Endothelial cell of umbilical vein (primary cell): ENCODE measurements at regions of chr6 and their contacts with region 1.

Region 1: DNA sequence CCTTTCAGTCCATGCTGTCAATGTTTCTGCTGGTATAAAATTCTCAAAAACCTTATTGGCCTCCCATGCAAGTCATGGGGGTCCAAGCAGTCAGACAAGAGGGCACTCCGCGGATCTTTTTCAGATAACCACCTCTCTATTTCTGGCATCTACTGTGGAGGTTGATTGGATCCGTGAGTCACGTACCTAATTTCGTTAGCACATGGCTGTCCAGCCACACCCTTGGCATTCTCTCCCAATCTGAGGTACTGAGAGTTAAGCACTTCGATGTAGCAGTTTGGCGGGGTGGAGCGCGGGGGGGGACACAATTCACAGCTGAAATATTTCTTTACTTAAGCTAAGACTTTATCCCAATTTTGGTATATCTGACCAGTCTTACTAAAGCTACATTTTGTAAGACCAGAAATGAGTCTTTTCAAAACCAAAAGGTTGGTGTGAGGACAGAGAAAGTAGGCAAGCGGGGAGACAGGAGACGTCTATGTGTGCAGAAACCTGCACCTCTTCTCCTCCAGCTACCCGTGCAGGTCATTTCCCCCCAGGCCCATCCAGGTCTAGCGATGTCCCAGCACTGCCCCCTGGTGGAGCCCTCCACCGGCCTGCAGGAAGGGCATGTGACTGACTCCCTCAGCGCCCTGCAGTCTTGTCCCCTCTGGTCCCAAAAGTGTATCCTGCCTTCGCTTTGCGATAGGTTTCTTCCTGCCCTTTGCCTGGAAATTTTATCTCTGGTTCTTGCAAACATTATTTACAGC is 113.1 kb downstream of the ADAT2 start:
- DNase-seq: peak; percentile 31
- H3K4me3 ChIP-seq: no peak overlapping the region
- H3K27ac ChIP-seq: no peak overlapping the region
- H3K4me1 ChIP-seq: no peaks in the 10 kb centered on the region
- H3K27me3 ChIP-seq: no peaks in the 10 kb centered on the region
- CTCF ChIP-seq: peak; percentile 63 to 73
- POLR2A ChIP-seq: no peak

Region 2: GRCh38 chr6:142566628-142567396 is 770.6 kb before region 1 on chr6:
- CTCF ChIA-PET with region 1: no interaction called
- POLR2A ChIA-PET with region 1: no interaction called
- dilution Hi-C with region 1: no loop called
- intact Hi-C with region 1: loop called (anchors 10 kb)
- DNase-seq: peak; percentile 62
- H3K4me3 ChIP-seq: no peak overlapping the region
- H3K27ac ChIP-seq: no peak overlapping the region
- H3K4me1 ChIP-seq: no peaks in the 10 kb centered on the region
- H3K27me3 ChIP-seq: peaks cover 2 to 16% of the 10 kb centered on the region in 2 experiments
- CTCF ChIP-seq: peak; percentile 82 to 85
- POLR2A ChIP-seq: no peak

Region 3: GRCh38 chr6:143215363-143215762 is 122.0 kb before region 1 on chr6:
- CTCF ChIA-PET with region 1: no interaction called
- POLR2A ChIA-PET with region 1: no interaction called
- dilution Hi-C with region 1: no loop called
- intact Hi-C with region 1: no loop called
- DNase-seq: no peak
- H3K4me3 ChIP-seq: no peak overlapping the region
- H3K27ac ChIP-seq: no peak overlapping the region
- H3K4me1 ChIP-seq: no peaks in the 10 kb centered on the region
- H3K27me3 ChIP-seq: no peaks in the 10 kb centered on the region
- CTCF ChIP-seq: no peak
- POLR2A ChIP-seq: no peak

Region 4: DNA sequence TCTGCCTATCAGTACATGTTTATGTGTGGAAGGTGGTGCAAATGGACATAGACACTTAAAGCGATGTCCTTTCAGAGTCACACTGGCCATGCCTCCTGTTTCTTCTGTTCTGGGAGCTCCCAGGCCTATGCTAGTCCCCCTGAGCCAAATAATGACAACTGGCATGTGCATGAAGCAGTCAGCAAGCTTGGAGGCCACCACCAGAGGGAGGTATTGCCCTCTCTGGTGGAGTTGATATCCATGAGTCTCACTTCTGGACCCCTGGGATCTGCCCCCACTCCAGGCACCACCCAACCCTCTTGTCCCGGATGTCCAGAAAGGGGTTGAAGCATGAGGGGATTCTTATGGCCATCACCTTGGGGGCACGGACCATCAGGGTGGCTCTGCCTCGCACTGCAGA is 104.5 kb before region 1 on chr6:
- CTCF ChIA-PET with region 1: interaction called, 60 read pairs
- POLR2A ChIA-PET with region 1: no interaction called
- dilution Hi-C with region 1: no loop called
- intact Hi-C with region 1: loop called (anchors 1 kb)
- DNase-seq: peak; percentile 44
- H3K4me3 ChIP-seq: no peak overlapping the region
- H3K27ac ChIP-seq: no peak overlapping the region
- H3K4me1 ChIP-seq: no peaks in the 10 kb centered on the region
- H3K27me3 ChIP-seq: no peaks in the 10 kb centered on the region
- CTCF ChIP-seq: peak; percentile 52 to 65
- POLR2A ChIP-seq: no peak

Region 5: DNA sequence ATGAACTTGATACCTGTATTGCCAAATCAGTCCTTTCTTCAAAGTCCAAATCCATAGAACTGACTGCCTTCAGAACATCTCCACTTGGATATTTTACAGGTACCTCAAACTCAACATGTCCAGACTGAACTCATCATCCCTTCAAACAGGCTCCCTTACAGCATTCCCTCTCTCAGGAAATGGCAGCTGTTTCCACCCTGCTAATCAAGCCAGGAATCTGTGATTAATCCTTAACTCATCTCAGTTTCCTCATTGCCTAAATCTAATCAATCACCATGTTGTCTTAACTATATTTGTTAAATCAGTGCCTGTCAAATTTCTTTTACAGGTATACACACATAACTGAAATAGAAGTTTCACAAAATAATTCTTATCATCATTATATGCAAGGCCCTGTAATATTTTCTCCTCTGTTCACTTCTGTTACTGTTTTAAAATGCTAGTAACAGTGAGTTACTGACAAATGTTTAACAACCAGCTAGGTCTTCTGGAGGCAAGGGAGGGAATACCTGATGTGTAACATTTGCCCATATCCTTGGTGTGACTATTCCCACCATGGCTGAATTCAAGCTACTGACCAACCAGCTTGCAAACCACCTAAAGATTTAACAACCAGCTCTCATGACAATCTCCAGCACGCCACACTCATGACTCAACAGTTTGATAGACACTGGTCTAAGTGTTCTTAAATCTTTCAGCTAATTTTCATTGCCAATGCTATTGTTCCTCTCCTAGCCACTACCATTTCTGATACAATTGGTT is 11.8 kb before region 1 on chr6:
- CTCF ChIA-PET with region 1: interaction called, 13 read pairs
- POLR2A ChIA-PET with region 1: no interaction called
- dilution Hi-C with region 1: no loop called
- intact Hi-C with region 1: no loop called
- DNase-seq: peak; percentile 82
- H3K4me3 ChIP-seq: no peak overlapping the region
- H3K27ac ChIP-seq: peak overlapping the region; percentile 33
- H3K4me1 ChIP-seq: peaks cover 14% of the 10 kb centered on the region
- H3K27me3 ChIP-seq: no peaks in the 10 kb centered on the region
- CTCF ChIP-seq: no peak
- POLR2A ChIP-seq: peak; percentile 18

Region 6: DNA sequence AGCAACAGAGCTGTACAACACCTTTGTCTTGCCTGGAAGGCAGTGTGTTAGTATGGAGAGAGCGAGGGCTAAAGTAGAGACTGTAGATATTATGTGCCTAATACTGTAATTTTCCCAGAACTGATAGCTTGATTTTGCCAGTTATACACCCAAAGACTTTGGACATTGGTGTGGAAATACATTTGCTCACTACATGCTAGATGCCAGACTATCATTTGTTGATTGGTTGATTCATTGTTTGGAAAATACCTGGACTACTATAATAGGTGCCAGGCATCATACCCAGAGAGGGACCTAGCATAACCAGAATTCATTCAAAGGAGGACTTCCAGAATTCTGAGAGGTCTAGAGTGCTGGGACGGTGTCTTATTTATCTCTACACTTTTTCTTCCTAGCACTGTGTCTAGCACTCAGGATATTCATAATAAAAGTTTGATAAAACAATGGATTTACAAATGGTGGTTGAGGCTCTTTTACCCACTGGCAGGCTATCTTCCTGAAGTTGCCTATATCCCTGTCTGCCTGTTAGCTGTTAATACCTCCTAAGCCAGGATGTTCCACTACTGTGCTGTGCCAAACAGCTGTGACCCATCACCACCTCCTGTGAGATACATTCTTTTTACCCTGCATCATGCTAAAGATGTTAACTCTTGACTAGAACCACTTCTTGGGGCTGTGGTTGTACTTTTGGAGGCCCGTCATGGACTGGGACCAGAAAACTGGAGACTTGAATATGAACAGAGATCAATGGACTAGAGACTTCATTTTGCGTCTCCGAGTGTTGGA is 246.4 kb after region 1 on chr6:
- CTCF ChIA-PET with region 1: no interaction called
- POLR2A ChIA-PET with region 1: no interaction called
- dilution Hi-C with region 1: no loop called
- intact Hi-C with region 1: no loop called
- DNase-seq: no peak
- H3K4me3 ChIP-seq: no peak overlapping the region
- H3K27ac ChIP-seq: no peak overlapping the region
- H3K4me1 ChIP-seq: peaks cover 9% of the 10 kb centered on the region
- H3K27me3 ChIP-seq: no peaks in the 10 kb centered on the region
- CTCF ChIP-seq: no peak
- POLR2A ChIP-seq: no peak